ENCODE measurements at regions of chr14 and their contacts with region 1.

Region 1: DNA sequence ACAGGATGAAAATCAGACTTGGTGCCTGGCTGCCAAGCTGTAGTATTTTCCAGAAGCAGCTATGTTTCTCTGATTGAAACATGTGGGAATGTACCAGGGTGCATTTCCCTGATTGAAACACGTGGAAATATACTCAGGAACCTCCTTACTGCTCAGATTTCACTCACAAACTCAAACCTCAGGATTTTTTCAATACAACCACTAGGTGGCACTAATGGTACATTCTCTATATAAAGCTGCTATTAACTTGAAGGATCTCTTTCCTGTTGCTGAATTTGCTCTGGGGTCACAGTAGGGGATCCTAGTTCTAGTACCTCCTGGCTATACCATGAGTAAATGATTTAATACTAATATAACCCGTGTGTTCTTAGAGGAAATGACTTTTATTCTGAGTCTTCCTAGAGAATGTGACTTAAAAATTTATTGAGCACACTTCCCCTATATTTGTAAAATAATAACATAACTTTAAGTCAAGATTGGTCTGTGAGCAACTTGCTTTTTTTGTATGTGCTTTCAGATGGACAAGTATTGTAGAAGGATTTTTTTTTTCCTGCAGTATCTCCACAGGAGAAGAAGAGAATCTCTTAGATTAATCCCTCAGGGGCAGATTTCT is 173.8 kb upstream of the MIS18BP1 start:
- DNase-seq: no peak
- ATAC-seq: peak; percentile 95
- H3K4me3 Mint-ChIP-seq: no peak overlapping the region
- H3K27ac Mint-ChIP-seq: no peak overlapping the region
- H3K4me1 Mint-ChIP-seq: peaks cover 10% of the 10 kb centered on the region
- H3K27me3 Mint-ChIP-seq: no peaks in the 10 kb centered on the region
- CTCF ChIP-seq: peak; percentile 49

Region 2: GRCh38 chr14:45284802-45285201 is 142.0 kb before region 1 on chr14:
- CTCF ChIA-PET with region 1: no interaction called
- POLR2A ChIA-PET with region 1: no interaction called
- DNase-seq: no peak
- ATAC-seq: peak; percentile 60
- H3K4me3 Mint-ChIP-seq: no peak overlapping the region
- H3K27ac Mint-ChIP-seq: no peak overlapping the region
- H3K4me1 Mint-ChIP-seq: no peaks in the 10 kb centered on the region
- H3K27me3 Mint-ChIP-seq: peaks cover 73% of the 10 kb centered on the region
- CTCF ChIP-seq: no peak

Region 3: DNA sequence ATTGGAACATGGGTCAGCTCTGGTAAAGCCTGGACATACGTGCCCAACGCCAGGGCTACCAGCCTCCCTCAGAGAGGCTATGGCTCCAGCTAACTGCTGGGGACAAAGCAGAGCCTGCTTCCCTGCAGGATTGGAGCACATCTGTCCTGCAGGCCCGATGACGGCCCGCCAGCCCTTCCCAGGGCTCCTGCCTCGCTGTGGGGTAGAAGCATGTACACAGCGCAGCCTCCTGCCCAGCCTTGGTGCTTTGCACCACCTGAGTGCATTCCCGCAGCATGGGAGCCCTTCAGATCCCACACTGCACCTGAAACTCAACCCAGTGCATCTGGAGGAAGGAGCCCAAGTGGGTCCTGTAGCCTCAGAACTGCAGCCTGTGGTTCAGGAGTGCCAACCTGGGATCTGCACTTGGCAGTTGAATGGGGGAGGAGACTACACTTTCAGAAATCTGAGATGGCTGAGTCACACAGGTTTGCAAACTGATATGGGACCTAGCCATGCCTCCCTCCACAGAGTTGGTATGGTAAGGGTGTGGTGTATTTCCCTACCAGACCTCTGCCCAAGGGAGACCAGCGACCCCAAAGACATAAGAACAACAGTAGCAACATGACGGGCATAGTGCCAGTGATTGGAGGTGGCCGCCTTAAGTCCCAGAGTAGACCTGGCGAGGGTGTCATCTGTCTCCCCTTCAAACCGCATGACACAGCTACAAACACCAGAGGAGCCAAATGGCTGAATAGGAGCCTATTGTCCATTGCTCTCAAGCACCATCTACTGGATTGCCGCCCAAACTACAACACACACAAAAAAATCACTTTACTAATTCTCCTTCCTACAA is 100.2 kb after region 1 on chr14:
- CTCF ChIA-PET with region 1: interaction called, 10 read pairs
- POLR2A ChIA-PET with region 1: no interaction called
- DNase-seq: peak; percentile 51
- ATAC-seq: peak; percentile 98
- H3K4me3 Mint-ChIP-seq: no peak overlapping the region
- H3K27ac Mint-ChIP-seq: no peak overlapping the region
- H3K4me1 Mint-ChIP-seq: 0 out of 2 replicates have a peak, but pooled peaks cover 3% of the 10 kb centered on the region
- H3K27me3 Mint-ChIP-seq: peaks cover 4% of the 10 kb centered on the region
- CTCF ChIP-seq: peak; percentile 35; the same call in 1 of the 2 replicates